Caco-2 (cell line): ENCODE measurements at regions of chr1 and their contacts with region 1.

Region 1: DNA sequence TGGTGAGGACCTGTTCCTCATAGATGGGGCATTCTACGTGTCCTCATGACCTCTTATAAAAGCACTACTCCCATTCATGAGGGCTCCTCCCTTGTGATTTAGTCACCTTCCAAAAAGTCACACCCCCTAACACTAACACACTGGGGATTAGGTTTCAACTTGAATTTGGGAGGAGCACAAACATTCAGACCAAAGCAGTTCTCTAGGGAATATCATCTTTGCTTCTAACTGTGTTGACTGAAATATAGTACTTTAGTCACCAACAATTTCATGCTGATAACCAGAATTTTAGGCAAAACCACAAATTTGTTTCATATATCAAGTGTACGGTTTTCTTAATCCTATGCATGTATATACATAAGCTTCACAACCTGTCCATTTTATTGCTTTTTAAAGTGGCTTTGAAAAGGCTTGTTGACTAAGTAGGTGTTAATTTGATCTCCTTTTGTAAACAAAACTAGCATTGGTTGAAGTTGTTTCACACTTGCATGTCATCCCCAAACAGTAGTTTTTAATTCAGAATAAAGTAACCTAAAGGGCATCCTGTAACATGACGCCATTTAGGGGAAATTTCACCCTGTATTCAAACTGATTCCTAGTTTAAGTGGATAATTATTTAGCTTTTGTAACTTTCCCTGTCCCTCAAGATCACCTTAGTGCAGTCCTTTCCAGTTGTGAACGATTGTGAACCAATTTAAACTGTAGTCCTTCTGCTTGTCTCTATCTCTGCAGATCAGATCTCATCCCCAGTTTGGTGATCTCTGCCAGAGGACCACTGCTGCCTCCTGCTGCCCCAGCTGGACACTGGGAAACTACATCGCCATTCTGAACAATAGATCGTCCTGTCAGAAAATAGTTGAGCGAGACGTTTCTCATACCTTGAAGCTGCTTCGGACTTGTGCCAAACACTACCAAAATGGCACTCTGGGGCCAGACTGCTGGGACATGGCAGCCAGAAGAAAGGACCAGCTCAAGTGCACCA is 141.1 kb downstream of the TLR5 start:
- DNase-seq: no peak
- H3K4me3 ChIP-seq: no peak overlapping the region
- H3K4me3 Mint-ChIP-seq: no peak overlapping the region
- H3K27ac Mint-ChIP-seq: no peak overlapping the region
- H3K4me1 ChIP-seq: peaks cover 28% of the 10 kb centered on the region
- H3K4me1 Mint-ChIP-seq: peaks cover 26% of the 10 kb centered on the region
- H3K27me3 ChIP-seq: no peaks in the 10 kb centered on the region
- H3K27me3 Mint-ChIP-seq: no peaks in the 10 kb centered on the region
- CTCF ChIP-seq: peak in 1 of 2 experiments; percentile 3

Region 2: GRCh38 chr1:222792744-222793143 is 209.2 kb before region 1 on chr1:
- CTCF ChIA-PET with region 1: no interaction called
- POLR2A ChIA-PET with region 1: no interaction called
- intact Hi-C with region 1: loop called (anchors 1 kb)
- DNase-seq: peak in 1 of 2 experiments; percentile 19
- H3K4me3 ChIP-seq: no peak overlapping the region
- H3K4me3 Mint-ChIP-seq: no peak overlapping the region
- H3K27ac Mint-ChIP-seq: no peak overlapping the region
- H3K4me1 ChIP-seq: 0 out of 2 replicates have a peak, but pooled peaks cover 4% of the 10 kb centered on the region
- H3K4me1 Mint-ChIP-seq: peaks cover 20% of the 10 kb centered on the region
- H3K27me3 ChIP-seq: no peaks in the 10 kb centered on the region
- H3K27me3 Mint-ChIP-seq: no peaks in the 10 kb centered on the region
- CTCF ChIP-seq: peak; percentile 52 to 62

Region 3: DNA sequence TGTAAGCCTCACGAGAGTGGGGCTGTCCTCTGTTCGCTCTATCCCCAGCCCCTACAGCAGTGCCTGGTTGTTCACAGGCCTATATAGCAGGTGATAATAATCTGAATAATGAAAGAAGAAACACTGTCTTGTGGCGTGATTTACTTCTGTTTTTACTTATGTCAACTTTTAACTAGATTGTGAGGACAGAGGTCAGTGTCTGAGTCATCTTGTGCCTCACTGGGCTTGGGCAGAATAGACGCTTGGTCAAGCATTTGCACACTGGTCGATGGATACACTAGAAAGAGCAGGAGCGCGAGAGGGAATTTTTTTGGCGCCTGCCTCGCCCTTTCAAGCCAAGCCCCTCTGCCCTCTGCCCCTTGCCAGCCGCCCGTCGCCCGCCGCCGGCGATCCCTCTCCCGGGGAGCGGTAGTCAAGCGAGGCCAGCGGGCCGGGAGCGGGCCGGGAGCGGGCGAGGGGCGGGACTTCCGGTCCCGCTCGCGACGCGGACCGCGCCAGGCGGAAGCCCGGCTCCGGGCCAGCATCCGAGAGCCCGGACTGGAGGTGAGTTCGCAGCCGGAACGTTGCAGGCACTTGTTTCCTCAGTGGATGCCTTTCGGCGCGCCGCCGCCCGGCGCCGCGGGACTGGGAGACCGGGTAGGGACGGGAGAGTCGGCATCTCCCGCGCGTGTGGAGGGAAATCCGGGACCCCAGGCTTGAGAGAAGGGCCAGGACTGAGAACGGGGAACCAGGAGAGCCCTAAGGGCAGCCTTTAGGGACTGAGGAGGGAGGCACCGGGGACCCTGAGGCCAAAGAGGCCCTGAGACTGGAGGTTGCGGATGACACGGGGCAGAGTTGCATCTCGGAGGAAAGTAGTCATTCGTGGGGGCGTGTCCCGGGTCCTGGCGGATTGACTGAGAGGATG is 187.2 kb before region 1 on chr1 and contains the start of gene DISP1:
- CTCF ChIA-PET with region 1: no interaction called
- POLR2A ChIA-PET with region 1: no interaction called
- intact Hi-C with region 1: loop called (anchors 5 kb)
- DNase-seq: peak; percentile 83 to 86
- H3K4me3 ChIP-seq: peak within 1 kb of the TSS; percentile 55
- H3K4me3 Mint-ChIP-seq: peak within 1 kb of the TSS; percentile 97
- H3K27ac Mint-ChIP-seq: peak within 1 kb of the TSS; percentile 72
- H3K4me1 ChIP-seq: peaks cover 25% of the 10 kb centered on the region
- H3K4me1 Mint-ChIP-seq: peaks cover 19% of the 10 kb centered on the region
- H3K27me3 ChIP-seq: no peaks in the 10 kb centered on the region
- H3K27me3 Mint-ChIP-seq: no peaks in the 10 kb centered on the region
- CTCF ChIP-seq: no peak
- total RNA-seq, gene DISP1: 6.6 and 7.1 TPM in 2 replicates

Region 4: GRCh38 chr1:223014142-223014873 is 12.4 kb after region 1 on chr1:
- CTCF ChIA-PET with region 1: no interaction called
- POLR2A ChIA-PET with region 1: no interaction called
- intact Hi-C with region 1: loop called (anchors 1 kb)
- DNase-seq: peak; percentile 63 to 64
- H3K4me3 ChIP-seq: no peak overlapping the region
- H3K4me3 Mint-ChIP-seq: no peak overlapping the region
- H3K27ac Mint-ChIP-seq: peak overlapping the region; percentile 44
- H3K4me1 ChIP-seq: peaks cover 45% of the 10 kb centered on the region
- H3K4me1 Mint-ChIP-seq: peaks cover 48% of the 10 kb centered on the region
- H3K27me3 ChIP-seq: no peaks in the 10 kb centered on the region
- H3K27me3 Mint-ChIP-seq: no peaks in the 10 kb centered on the region
- CTCF ChIP-seq: no peak